ENCODE measurements at regions of chr10 and their contacts with region 1.

Region 1: DNA sequence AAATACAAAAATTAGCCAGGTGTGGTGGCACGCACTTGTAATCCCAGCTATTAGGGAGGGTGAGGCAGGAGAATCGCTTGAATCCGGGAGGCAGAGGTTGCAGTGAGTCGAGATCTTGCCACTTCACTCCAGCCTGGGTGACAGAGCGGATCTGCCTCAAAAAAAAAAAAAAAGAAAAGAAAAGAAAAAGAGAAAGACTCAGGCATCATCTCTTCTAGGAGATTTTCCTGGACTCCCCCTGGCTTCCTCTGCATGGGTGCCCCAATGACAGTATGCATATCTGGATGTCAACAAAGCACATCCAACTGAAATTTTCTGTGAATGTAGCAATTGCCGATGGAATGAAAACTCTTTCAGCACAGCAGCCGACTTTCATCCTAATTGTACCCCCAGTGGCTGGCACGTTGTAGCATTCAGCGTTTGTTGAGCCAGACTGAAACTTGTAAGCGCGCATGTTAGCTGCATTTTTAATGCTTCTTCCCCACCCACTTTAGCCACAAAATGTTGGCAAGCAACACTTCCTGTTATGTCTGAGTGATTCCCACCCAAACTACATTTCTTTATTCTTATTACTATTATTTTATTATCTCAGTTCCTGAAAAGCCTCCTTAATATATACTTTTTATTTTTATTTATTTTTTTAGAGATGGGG is 70.2 kb downstream of the PRTFDC1 start:
- DNase-seq: peak in 9 of 10 donors; percentile 22 to 80 (median 60)
- ATAC-seq: peak; percentile 85 to 90
- H3K4me3 Mint-ChIP-seq: peak overlapping the region; percentile 70 to 90 (median 82)
- H3K27ac Mint-ChIP-seq: peak overlapping the region; percentile 88 to 99 (median 96)
- H3K4me1 Mint-ChIP-seq: peaks cover 13 to 67% (median 65%) of the 10 kb centered on the region in 4 donors
- H3K27me3 Mint-ChIP-seq: no peaks in the 10 kb centered on the region

Region 2: GRCh38 chr10:24349379-24350001 is 532.7 kb before region 1 on chr10:
- POLR2A ChIA-PET with region 1: no interaction called
- DNase-seq: no peak
- ATAC-seq: no peak
- H3K4me3 Mint-ChIP-seq: no peak overlapping the region
- H3K27ac Mint-ChIP-seq: no peak overlapping the region
- H3K4me1 Mint-ChIP-seq: peaks cover 0 to 1% (median 0%) of the 10 kb centered on the region in 4 donors
- H3K27me3 Mint-ChIP-seq: peaks cover 2 to 14% (median 2%) of the 10 kb centered on the region in 5 donors

Region 3: DNA sequence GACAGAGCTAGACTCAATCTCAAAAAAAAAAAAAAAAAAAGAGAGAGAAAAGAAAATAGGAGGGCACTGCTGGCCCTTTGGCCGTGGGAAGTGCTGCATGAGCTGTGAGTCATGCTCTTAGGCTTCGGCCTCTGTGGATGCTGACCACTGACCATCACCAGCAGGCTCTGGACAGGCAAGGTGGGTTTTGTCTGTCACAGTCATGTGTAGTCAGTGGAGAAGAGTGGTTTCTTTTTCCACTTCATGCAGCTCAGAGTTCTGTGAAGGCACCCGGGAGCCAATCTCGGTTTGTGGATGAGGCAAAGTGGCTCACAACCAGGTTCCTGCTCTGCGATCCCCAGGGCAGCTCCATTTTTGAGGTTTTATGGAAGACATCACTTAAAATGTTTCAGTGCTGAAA is 12.1 kb after region 1 on chr10:
- POLR2A ChIA-PET with region 1: interaction called, 45 read pairs
- DNase-seq: no peak
- ATAC-seq: peak; percentile 48 to 52
- H3K4me3 Mint-ChIP-seq: peak overlapping the region; percentile 62 to 89 (median 86)
- H3K27ac Mint-ChIP-seq: peak overlapping the region; percentile 91 to 99 (median 96)
- H3K4me1 Mint-ChIP-seq: peaks cover 25 to 66% (median 60%) of the 10 kb centered on the region in 4 donors
- H3K27me3 Mint-ChIP-seq: no peaks in the 10 kb centered on the region

Region 4: DNA sequence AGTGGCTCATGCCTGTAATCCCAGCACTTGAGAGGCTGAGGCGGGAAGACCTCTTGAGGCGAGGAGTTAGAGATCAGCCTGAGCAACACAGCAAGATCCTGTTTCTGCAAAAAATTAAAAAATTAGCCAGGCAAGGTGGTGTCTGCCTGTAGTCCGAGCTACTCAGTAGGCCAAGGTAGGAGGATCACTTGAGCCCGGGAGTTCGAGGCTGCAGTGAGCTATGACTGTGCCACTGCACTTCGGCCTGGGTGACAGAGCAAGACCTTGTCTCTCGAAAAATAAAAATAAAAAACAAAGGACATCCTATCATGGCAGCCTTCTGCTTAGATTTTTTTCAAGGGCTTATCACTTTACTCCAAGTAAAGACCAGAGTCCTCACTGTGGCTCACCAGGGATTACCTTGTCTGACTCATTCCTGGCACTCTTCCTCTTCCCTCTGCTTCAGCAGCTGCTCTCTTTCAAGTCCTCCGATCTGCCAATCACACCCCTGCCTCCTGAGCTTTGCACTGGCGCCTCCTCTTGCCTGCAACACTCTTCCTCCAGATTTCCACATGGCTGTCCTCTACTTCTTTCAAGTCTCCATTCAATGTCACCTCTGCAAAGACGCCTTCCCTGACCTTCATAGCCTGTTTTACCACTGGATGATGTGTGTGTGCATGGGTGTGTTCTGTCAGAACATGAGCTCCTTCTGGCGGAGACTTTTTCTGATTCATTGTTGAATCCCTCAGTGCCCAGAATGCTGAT is 62.5 kb after region 1 on chr10:
- POLR2A ChIA-PET with region 1: no interaction called
- DNase-seq: no peak
- ATAC-seq: no peak
- H3K4me3 Mint-ChIP-seq: no peak overlapping the region
- H3K27ac Mint-ChIP-seq: peak overlapping the region in 5 of 10 donors; percentile 6 to 67 (median 47)
- H3K4me1 Mint-ChIP-seq: peaks cover 0 to 12% (median 2%) of the 10 kb centered on the region in 4 donors
- H3K27me3 Mint-ChIP-seq: no peaks in the 10 kb centered on the region

Measured in naive thymus-derived CD8-positive, alpha-beta T cell (primary cell).